Right ventricle myocardium superior (tissue), 1 donor: ENCODE measurements at regions of chr10 and their contacts with region 1.

Region 1: DNA sequence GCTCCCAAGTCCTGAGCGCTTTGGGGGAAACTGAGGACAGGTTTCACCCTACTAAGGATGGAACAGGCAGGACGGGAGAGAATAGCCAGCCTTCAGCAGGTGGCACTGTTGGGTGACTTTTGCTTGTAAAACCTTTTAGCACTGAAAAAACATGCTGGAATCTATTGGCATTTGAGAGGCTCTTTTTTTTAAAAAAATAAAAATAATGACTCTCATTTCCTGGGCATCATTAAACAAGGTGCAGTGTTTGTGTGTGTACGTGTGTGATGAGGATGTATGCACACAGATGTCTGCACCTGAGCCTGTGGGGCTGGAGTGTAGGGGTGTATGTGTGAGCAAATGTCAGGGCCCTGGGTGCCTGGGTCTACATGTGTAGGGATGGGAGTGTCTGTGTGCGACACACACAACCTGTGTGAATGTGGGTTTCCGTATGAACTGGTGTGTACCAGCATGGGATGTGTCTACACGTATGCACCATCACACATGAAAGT is 177.9 kb downstream of the RPS24 start:
- DNase-seq: no peak
- ATAC-seq: peak; percentile 30

Region 2: GRCh38 chr10:78071140-78071856 is 140.3 kb before region 1 on chr10:
- intact Hi-C with region 1: no loop called
- DNase-seq: no peak
- ATAC-seq: peak; percentile 72

Region 3: GRCh38 chr10:78520737-78521430 is 309.3 kb after region 1 on chr10:
- intact Hi-C with region 1: loop called (anchors 10 kb)
- DNase-seq: no peak
- ATAC-seq: no peak

Region 4: DNA sequence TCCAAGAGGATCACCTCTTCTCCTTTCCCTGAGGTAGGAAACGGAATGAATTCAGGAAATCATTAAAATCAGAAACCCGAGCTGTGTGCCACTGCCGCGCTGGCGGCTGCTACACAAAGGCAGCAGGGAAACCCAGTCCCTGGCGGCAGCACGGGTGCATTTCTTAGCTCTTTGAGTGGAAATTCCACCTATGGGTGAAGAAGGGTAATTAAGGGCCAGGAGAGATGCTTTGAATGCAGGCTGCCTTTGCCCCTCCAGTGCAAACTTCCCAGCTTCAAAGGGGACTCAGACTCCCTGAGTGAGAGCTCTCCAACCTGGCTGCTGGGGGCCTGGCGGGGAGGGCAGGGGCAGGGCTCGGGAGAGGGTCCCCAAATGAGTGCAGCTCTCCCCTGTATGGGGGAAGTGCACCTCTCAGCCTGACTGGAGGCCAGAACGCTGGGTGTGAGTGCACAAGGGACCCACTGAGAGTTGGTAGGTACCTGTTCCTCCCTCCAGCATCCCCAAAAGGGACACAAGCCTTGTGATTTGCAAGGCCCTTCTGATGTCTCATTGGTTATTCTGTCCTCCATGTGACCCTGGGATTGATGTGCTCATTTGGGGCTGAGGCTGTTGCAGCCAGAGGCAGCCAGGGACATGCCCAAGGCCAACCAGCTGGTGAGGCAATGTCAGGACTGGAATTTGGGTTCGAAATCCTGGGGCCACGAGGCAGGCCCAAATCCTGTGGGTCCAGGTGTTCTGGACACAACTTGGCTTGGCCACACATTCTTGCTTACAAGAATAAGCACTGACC is 840.9 kb after region 1 on chr10:
- intact Hi-C with region 1: no loop called
- DNase-seq: no peak
- ATAC-seq: no peak

Region 5: DNA sequence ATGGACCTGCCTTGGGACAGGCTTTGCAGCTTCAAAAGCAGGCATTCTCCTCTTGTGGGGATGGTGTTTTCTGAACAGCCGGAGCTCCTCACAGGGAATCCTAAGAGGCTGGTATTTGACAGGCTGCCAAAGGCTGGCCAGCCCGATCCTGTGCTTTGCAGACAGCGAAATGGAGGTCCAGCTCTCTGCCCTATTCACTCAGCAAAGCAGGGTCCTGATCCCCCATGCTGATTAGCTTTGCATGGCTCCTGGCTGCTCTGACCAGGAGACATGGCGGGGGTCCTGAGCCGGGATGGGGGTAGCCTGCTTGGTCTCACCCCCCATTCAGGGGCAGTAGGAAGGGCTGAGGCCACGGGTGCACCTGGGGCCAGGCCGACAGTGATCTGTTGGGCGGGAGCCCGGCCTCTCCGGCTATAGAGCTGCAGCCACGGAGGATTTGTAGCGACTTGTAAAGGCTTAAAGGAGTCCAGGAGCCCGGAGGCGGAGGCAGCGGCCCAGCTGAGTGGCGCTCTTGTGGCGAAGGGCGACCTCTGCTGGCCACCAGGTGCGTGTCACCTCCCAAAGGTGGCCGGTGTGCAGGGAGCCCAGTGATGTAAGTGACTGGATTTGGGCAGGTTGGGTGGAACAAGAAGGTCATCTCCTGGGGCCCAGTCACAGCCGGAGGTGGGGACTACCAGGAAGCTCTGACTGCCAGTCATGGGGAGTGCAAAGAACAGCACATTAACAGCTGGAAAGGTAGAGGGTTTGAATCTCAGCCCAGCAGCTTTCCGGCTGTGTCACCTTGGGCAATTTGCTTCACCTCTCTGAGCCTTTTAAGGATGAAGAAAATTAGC is 983.7 kb after region 1 on chr10:
- intact Hi-C with region 1: loop called (anchors 10 kb)
- DNase-seq: peak; percentile 94
- ATAC-seq: peak; percentile 90